Activated T-helper 1 cell treated with anti-CD3 and anti-CD28 coated beads, Interleukin-12 subunit alpha, Interleukin-12 subunit beta, Interleukin-2, Interleukin-4 antibody, amounts not matched to agents 30 ng/mL and 10 ng/mL and 1 ng/mL, durations not matched to agents 14 hours and 24 hours and 36 hours (primary cell): ENCODE measurements at regions of chr15 and their contacts with region 1.

Region 1: GRCh38 chr15:77419836-77420609 is at the start of gene PEAK1:
- DNase-seq: peak; percentile 98
- H3K4me3 Mint-ChIP-seq: peak within 1 kb of the TSS; percentile 99
- H3K27ac Mint-ChIP-seq: peak within 1 kb of the TSS; percentile 98
- H3K4me1 Mint-ChIP-seq: peaks cover 60% of the 10 kb centered on the region
- H3K27me3 Mint-ChIP-seq: peaks cover 4% of the 10 kb centered on the region
- total RNA-seq, gene PEAK1: 24.3 and 27.0 TPM in 2 replicates

Region 2: GRCh38 chr15:76905013-76905839 is 514.8 kb before region 1 on chr15 and contains the start of gene SCAPER:
- intact Hi-C with region 1: loop called (anchors 1 kb)
- DNase-seq: peak; percentile 88
- H3K4me3 Mint-ChIP-seq: peak within 1 kb of the TSS; percentile 91
- H3K27ac Mint-ChIP-seq: peak within 1 kb of the TSS; percentile 93
- H3K4me1 Mint-ChIP-seq: peaks cover 36% of the 10 kb centered on the region
- H3K27me3 Mint-ChIP-seq: peaks cover 4% of the 10 kb centered on the region
- total RNA-seq, gene SCAPER: 21.5 and 23.5 TPM in 2 replicates

Region 3: DNA sequence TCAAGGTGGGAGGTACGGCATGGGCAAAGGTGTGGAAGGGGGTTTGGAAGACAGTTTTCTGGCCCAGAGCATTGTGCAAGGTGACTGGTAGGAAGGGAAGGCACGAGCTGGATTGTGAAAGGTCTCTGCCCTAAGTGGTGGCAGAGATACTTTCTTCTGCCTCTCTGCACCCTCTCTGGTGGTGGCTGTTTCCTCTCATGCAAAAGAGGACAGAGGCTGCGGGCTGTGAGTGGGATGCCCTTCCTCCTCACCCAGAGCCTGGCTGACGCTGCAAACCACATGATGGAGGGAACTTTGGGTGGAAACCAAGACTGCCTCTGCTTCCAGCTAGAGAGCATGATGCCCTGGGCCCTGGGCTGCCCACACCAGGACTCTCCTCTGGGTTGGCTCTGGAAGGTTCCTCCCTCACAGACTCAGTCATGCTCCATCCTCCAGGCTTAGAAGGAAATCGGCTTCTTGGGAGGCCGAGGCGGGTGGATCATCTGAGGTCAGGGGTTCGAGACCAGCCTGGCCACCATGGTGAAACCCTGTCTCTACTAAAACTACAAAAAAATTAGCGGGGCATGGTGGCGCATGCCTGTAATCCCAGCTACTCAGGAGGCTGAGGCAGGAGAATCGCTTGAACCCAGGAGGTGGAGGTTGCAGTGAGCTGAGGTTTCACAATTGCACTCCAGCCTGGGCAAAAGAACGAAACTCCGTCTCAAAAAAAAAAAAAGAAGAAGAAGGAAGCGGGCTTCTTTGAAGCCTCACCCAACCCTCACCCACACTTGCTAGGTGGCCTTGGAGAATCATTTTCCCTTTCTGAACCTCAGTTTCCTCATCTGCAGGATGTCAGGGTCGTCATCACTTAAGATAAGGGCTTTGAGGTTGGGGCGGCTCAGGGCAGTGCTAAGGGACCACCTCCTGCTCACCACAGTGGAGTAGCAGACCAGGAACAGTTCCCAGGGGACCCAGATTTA is 416.8 kb before region 1 on chr15:
- intact Hi-C with region 1: loop called (anchors 5 kb)
- DNase-seq: peak; percentile 74
- H3K4me3 Mint-ChIP-seq: peak overlapping the region; percentile 80
- H3K27ac Mint-ChIP-seq: peak overlapping the region; percentile 96
- H3K4me1 Mint-ChIP-seq: peaks cover 86% of the 10 kb centered on the region
- H3K27me3 Mint-ChIP-seq: no peaks in the 10 kb centered on the region

Region 4: DNA sequence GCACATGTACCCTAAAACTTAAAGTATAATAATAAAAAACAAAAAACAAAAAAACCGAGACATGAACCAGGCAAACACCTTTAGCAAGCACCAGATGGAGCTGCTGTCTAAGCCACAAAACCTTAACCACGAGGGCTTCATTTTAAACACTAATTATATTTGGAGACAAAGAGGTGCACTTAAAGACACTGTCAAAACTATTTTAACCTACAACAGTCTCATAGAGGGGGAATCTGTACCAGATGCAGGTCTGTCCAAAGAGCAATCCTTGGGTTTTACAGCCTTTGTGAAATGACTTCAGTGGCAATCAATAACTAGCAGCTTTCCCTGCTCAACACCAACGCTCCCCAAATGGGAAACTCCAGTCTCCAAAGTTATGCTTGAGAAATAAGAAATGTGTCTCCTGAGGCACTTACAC is 233.4 kb before region 1 on chr15:
- intact Hi-C with region 1: loop called (anchors 1 kb)
- DNase-seq: no peak
- H3K4me3 Mint-ChIP-seq: no peak overlapping the region
- H3K27ac Mint-ChIP-seq: peak overlapping the region; percentile 37
- H3K4me1 Mint-ChIP-seq: peaks cover 69% of the 10 kb centered on the region
- H3K27me3 Mint-ChIP-seq: no peaks in the 10 kb centered on the region

Region 5: GRCh38 chr15:77409259-77410156 is 10.5 kb before region 1 on chr15:
- intact Hi-C with region 1: loop called (anchors 1 kb)
- DNase-seq: peak; percentile 39
- H3K4me3 Mint-ChIP-seq: peak overlapping the region; percentile 72
- H3K27ac Mint-ChIP-seq: peak overlapping the region; percentile 89
- H3K4me1 Mint-ChIP-seq: peaks cover 47% of the 10 kb centered on the region
- H3K27me3 Mint-ChIP-seq: no peaks in the 10 kb centered on the region

Region 6: GRCh38 chr15:77455696-77456321 is 35.8 kb after region 1 on chr15:
- intact Hi-C with region 1: loop called (anchors 5 kb)
- DNase-seq: no peak
- H3K4me3 Mint-ChIP-seq: no peak overlapping the region
- H3K27ac Mint-ChIP-seq: peak overlapping the region; percentile 59
- H3K4me1 Mint-ChIP-seq: peaks cover 26% of the 10 kb centered on the region
- H3K27me3 Mint-ChIP-seq: no peaks in the 10 kb centered on the region